B cell (primary cell): ENCODE measurements at regions of chr2 and their contacts with region 1.

Region 1: GRCh38 chr2:203177361-203177760 is 61.5 kb upstream of the CYP20A1 start:
- DNase-seq: no peak
- ATAC-seq: no peak
- H3K4me3 ChIP-seq: no peak overlapping the region
- H3K4me3 Mint-ChIP-seq: no peak overlapping the region
- H3K27ac ChIP-seq: no peak overlapping the region
- H3K27ac Mint-ChIP-seq: no peak overlapping the region
- H3K4me1 ChIP-seq: no peaks in the 10 kb centered on the region
- H3K4me1 Mint-ChIP-seq: no peaks in the 10 kb centered on the region
- H3K27me3 ChIP-seq: no peaks in the 10 kb centered on the region
- H3K27me3 Mint-ChIP-seq: no peaks in the 10 kb centered on the region
- CTCF ChIP-seq: no peak

Region 2: GRCh38 chr2:202671317-202672035 is 505.9 kb before region 1 on chr2:
- CTCF ChIA-PET with region 1: no interaction called
- POLR2A ChIA-PET with region 1: no interaction called
- intact Hi-C with region 1: no loop called
- DNase-seq: no peak
- ATAC-seq: no peak
- H3K4me3 ChIP-seq: peak overlapping the region in 1 of 5 experiments; percentile 27
- H3K4me3 Mint-ChIP-seq: peak overlapping the region; percentile 5
- H3K27ac ChIP-seq: peak overlapping the region; percentile 16 to 67
- H3K27ac Mint-ChIP-seq: peak overlapping the region; percentile 90
- H3K4me1 ChIP-seq: peaks cover 82 to 83% of the 10 kb centered on the region in 2 donors
- H3K4me1 Mint-ChIP-seq: peaks cover 77% of the 10 kb centered on the region
- H3K27me3 ChIP-seq: no peaks in the 10 kb centered on the region
- H3K27me3 Mint-ChIP-seq: no peaks in the 10 kb centered on the region
- CTCF ChIP-seq: no peak

Region 3: GRCh38 chr2:203164311-203164935 is 12.9 kb before region 1 on chr2:
- CTCF ChIA-PET with region 1: no interaction called
- POLR2A ChIA-PET with region 1: no interaction called
- intact Hi-C with region 1: loop called (anchors 1 kb)
- DNase-seq: no peak
- ATAC-seq: no peak
- H3K4me3 ChIP-seq: no peak overlapping the region
- H3K4me3 Mint-ChIP-seq: no peak overlapping the region
- H3K27ac ChIP-seq: no peak overlapping the region
- H3K27ac Mint-ChIP-seq: no peak overlapping the region
- H3K4me1 ChIP-seq: no peaks in the 10 kb centered on the region
- H3K4me1 Mint-ChIP-seq: no peaks in the 10 kb centered on the region
- H3K27me3 ChIP-seq: no peaks in the 10 kb centered on the region
- H3K27me3 Mint-ChIP-seq: no peaks in the 10 kb centered on the region
- CTCF ChIP-seq: no peak